Heart right ventricle (tissue), 16 donors: ENCODE measurements at regions of chr2 and their contacts with region 1.

Region 1: GRCh38 chr2:36785179-36785795 is 88.8 kb downstream of the VIT start:
- DNase-seq: peak; percentile 42 to 44
- ATAC-seq: peak in 6 of 8 donors; percentile 27 to 63 (median 59)
- H3K4me3 ChIP-seq: no peak overlapping the region
- H3K27ac ChIP-seq: no peak overlapping the region
- H3K4me1 ChIP-seq: peaks cover 0 to 28% (median 6%) of the 10 kb centered on the region in 9 donors
- H3K27me3 ChIP-seq: no peaks in the 10 kb centered on the region
- CTCF ChIP-seq: peak; percentile 91 to 97 (median 93)

Region 2: DNA sequence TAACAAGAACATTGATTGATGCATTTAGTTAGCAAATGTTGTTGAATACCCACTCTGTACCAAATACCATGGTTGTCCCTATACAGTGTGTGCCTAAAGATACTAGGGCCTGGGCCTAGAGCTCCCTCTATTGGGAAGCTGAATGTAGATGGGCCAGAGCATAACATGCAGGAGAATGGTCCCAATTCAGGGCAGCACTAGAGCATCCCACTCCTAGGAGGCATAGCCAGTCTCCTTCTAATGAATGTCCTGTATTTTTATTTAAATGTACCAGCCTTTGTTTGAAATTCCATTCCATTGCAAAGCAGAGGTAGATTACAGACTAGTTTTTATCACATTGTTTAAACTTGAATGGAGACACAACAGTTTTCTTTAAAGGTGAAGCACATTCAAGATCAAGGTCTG is 277.9 kb before region 1 on chr2:
- intact Hi-C with region 1: loop called in 1 of 10 experiments (anchors 10 kb)
- DNase-seq: peak in 1 of 2 donors; percentile 58
- ATAC-seq: peak; percentile 85 to 96 (median 94)
- H3K4me3 ChIP-seq: no peak overlapping the region
- H3K27ac ChIP-seq: no peak overlapping the region
- H3K4me1 ChIP-seq: no peaks in the 10 kb centered on the region
- H3K27me3 ChIP-seq: no peaks in the 10 kb centered on the region
- CTCF ChIP-seq: peak; percentile 54 to 92 (median 83)

Region 3: DNA sequence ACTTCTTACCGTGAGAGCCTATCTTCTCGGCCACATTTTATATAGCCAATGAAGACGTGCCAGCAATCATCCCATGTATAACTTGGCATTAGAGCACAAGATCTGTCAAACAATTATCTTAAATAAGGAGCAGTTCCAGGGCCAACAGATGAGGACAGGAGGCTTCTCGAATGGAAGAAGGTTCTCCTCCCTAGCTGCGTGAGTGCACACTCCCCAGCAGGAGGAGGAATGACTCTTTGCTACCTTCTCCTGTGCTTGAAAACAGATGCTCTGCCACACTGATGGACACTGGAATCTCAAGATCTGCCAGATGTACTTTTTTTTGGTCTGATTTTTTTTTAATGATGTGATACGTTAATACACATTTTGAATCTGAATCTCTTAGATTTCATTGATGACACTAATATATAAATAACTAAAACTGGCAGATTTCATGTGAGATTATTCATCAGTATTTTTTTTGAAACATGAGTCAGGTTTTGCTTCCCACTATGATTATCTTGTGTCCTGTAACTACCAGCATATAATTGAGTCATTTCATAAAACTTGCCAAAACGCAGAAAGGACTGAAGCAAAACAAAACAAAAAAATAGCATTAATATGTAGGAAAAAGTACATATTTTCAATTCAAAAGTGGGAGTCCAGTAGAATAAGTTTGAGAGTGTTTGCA is 89.4 kb before region 1 on chr2:
- intact Hi-C with region 1: loop called in 1 of 10 experiments (anchors 10 kb)
- DNase-seq: no peak
- ATAC-seq: peak in 6 of 8 donors; percentile 45 to 71 (median 52)
- H3K4me3 ChIP-seq: peak overlapping the region in 4 of 10 donors; percentile 23 to 38 (median 35)
- H3K27ac ChIP-seq: peak overlapping the region in 1 of 10 donors; percentile 19
- H3K4me1 ChIP-seq: no peaks in the 10 kb centered on the region
- H3K27me3 ChIP-seq: peaks cover 0 to 7% (median 0%) of the 10 kb centered on the region in 7 donors
- CTCF ChIP-seq: peak in 3 of 9 donors; percentile 17 to 38 (median 23)

Region 4: DNA sequence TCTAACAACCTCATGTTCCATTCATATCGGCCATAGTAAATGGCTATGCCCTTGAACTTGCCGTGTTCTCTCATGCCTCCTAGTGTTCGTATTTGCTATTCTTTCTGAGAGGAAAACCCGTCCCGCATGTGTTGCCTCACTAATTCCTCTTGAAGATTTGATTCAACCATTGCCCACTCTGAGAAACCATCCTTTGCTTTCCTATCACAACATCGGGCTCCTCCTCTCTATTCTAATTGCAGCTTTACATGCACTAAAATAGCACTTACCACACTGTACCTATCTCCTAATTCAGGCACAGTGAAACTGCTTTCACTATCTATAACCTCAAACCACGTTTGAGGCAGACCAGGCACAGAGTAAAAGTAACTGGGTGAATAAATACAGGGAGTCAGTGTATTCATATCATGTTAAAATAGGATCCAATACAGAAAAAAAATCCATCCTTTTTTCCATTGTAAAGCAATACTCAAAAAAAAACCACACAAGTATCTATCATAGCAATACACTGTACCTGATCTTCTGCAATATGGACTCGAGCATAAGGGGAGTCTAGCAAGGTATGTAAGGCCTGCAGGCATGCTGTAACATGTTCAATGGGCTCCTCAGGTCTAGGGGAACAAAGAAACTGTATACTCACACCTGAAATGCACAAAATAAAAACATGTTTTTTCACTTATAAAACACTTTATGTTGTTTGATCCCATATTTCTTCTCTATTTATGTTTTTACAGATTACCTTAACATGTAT is 220.0 kb after region 1 on chr2:
- intact Hi-C with region 1: loop called in 3 of 10 experiments (anchors 5 to 10 kb)
- DNase-seq: peak in 1 of 2 donors; percentile 21
- ATAC-seq: peak; percentile 73 to 95 (median 89)
- H3K4me3 ChIP-seq: no peak overlapping the region
- H3K27ac ChIP-seq: peak overlapping the region in 8 of 10 donors; percentile 3 to 87 (median 66)
- H3K4me1 ChIP-seq: peaks cover 0 to 22% (median 0%) of the 10 kb centered on the region in 9 donors
- H3K27me3 ChIP-seq: no peaks in the 10 kb centered on the region
- CTCF ChIP-seq: peak in 8 of 9 donors; percentile 7 to 60 (median 51)